B cell (primary cell): ENCODE measurements at regions of chr12 and their contacts with region 1.

Region 1: GRCh38 chr12:96035278-96036236 is at the start of gene LTA4H:
- DNase-seq: peak; percentile 100
- ATAC-seq: peak; percentile 90
- H3K4me3 ChIP-seq: peak within 1 kb of the TSS; percentile 62 to 99 (median 92)
- H3K4me3 Mint-ChIP-seq: no peak within 1 kb of the TSS
- H3K27ac ChIP-seq: peak within 1 kb of the TSS; percentile 64 to 69
- H3K27ac Mint-ChIP-seq: no peak within 1 kb of the TSS
- H3K4me1 ChIP-seq: peaks cover 40 to 44% of the 10 kb centered on the region in 2 donors
- H3K4me1 Mint-ChIP-seq: peaks cover 15% of the 10 kb centered on the region
- H3K27me3 ChIP-seq: no peaks in the 10 kb centered on the region
- H3K27me3 Mint-ChIP-seq: no peaks in the 10 kb centered on the region
- CTCF ChIP-seq: no peak
- total RNA-seq, gene LTA4H: 158 and 167 TPM in 2 replicates

Region 2: GRCh38 chr12:95574799-95575452 is 460.6 kb before region 1 on chr12:
- CTCF ChIA-PET with region 1: no interaction called
- POLR2A ChIA-PET with region 1: no interaction called
- intact Hi-C with region 1: loop called (anchors 10 kb)
- DNase-seq: peak; percentile 14
- ATAC-seq: no peak
- H3K4me3 ChIP-seq: peak overlapping the region in 1 of 5 experiments; percentile 43
- H3K4me3 Mint-ChIP-seq: peak overlapping the region; percentile 82
- H3K27ac ChIP-seq: peak overlapping the region; percentile 72 to 74
- H3K27ac Mint-ChIP-seq: peak overlapping the region; percentile 92
- H3K4me1 ChIP-seq: peaks cover 41 to 46% of the 10 kb centered on the region in 2 donors
- H3K4me1 Mint-ChIP-seq: peaks cover 43% of the 10 kb centered on the region
- H3K27me3 ChIP-seq: peaks cover 0 to 4% (median 0%) of the 10 kb centered on the region in 4 experiments
- H3K27me3 Mint-ChIP-seq: no peaks in the 10 kb centered on the region
- CTCF ChIP-seq: peak; percentile 27

Region 3: GRCh38 chr12:95858479-95859343 is 176.8 kb before region 1 on chr12 and contains the start of gene SNRPF:
- CTCF ChIA-PET with region 1: no interaction called
- POLR2A ChIA-PET with region 1: no interaction called
- intact Hi-C with region 1: loop called (anchors 1 kb)
- DNase-seq: peak; percentile 97
- ATAC-seq: peak; percentile 96
- H3K4me3 ChIP-seq: peak within 1 kb of the TSS; percentile 70 to 89 (median 76)
- H3K4me3 Mint-ChIP-seq: no peak within 1 kb of the TSS
- H3K27ac ChIP-seq: peak within 1 kb of the TSS; percentile 83 to 95
- H3K27ac Mint-ChIP-seq: peak within 1 kb of the TSS; percentile 37
- H3K4me1 ChIP-seq: peaks cover 24 to 28% of the 10 kb centered on the region in 2 donors
- H3K4me1 Mint-ChIP-seq: peaks cover 14% of the 10 kb centered on the region
- H3K27me3 ChIP-seq: peaks cover 0 to 11% (median 9%) of the 10 kb centered on the region in 4 experiments
- H3K27me3 Mint-ChIP-seq: peaks cover 9% of the 10 kb centered on the region
- CTCF ChIP-seq: peak; percentile 18
- total RNA-seq, gene SNRPF: 23.8 and 25.5 TPM in 2 replicates

Region 4: DNA sequence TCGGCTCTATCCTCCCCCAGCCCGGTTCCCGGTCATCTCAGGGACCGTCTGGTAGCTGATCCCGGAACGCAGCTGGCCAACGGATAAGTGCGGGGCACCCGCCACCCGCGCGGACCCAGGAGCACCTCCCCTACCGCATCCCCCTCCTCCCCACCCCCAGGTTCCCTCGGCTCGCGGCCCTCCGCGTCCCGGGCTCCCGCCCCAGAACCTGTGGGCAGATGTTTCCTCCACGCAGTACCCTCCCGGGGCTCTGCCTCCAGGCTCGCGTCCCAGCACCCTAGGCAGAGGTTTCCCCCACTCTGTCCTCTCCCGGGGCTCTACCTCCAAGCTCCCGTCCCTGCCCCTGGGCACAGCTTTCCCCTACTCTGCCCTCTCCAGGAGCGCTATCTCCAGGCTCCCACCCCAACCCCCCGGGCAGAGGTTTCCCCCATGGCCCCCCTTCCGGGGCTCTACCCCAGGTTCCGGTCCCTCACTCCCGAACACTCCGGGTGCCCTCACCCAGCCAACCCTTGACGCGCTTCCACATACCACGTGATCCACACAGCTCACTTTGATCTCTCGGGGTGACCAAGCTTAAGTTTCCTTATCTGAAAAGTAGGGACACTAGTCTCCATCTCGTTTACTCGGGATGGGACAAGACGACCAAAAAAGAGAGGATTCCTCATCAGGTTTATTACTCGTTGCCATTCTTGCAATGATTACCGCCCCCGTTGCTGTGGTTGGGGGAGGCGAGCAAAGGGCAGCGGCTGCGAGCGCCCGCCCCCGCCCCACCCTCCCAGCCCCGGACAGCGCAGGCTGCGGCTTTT is 92.8 kb before region 1 on chr12 and contains the start of gene CCDC38:
- CTCF ChIA-PET with region 1: interaction called, 4 read pairs
- POLR2A ChIA-PET with region 1: interaction called, 4 read pairs
- intact Hi-C with region 1: loop called (anchors 2 kb)
- DNase-seq: peak; percentile 85
- ATAC-seq: peak; percentile 88
- H3K4me3 ChIP-seq: peak within 1 kb of the TSS; percentile 68 to 94 (median 89)
- H3K4me3 Mint-ChIP-seq: peak within 1 kb of the TSS; percentile 98
- H3K27ac ChIP-seq: peak within 1 kb of the TSS; percentile 71 to 87
- H3K27ac Mint-ChIP-seq: peak within 1 kb of the TSS; percentile 92
- H3K4me1 ChIP-seq: peaks cover 9 to 11% of the 10 kb centered on the region in 2 donors
- H3K4me1 Mint-ChIP-seq: peaks cover 10% of the 10 kb centered on the region
- H3K27me3 ChIP-seq: no peaks in the 10 kb centered on the region
- H3K27me3 Mint-ChIP-seq: no peaks in the 10 kb centered on the region
- CTCF ChIP-seq: no peak
- total RNA-seq, gene CCDC38: 1.00 and 1.3 TPM in 2 replicates

Region 5: GRCh38 chr12:96020314-96021003 is 15.1 kb before region 1 on chr12:
- CTCF ChIA-PET with region 1: interaction called, 12 read pairs
- POLR2A ChIA-PET with region 1: interaction called, 14 read pairs
- intact Hi-C with region 1: loop called (anchors 1 kb)
- DNase-seq: peak; percentile 77
- ATAC-seq: peak; percentile 95
- H3K4me3 ChIP-seq: peak overlapping the region in 4 of 5 experiments; percentile 6 to 28 (median 20)
- H3K4me3 Mint-ChIP-seq: peak overlapping the region; percentile 62
- H3K27ac ChIP-seq: peak overlapping the region; percentile 62 to 79
- H3K27ac Mint-ChIP-seq: peak overlapping the region; percentile 89
- H3K4me1 ChIP-seq: peaks cover 28 to 34% of the 10 kb centered on the region in 2 donors
- H3K4me1 Mint-ChIP-seq: peaks cover 30% of the 10 kb centered on the region
- H3K27me3 ChIP-seq: no peaks in the 10 kb centered on the region
- H3K27me3 Mint-ChIP-seq: no peaks in the 10 kb centered on the region
- CTCF ChIP-seq: no peak

Region 6: DNA sequence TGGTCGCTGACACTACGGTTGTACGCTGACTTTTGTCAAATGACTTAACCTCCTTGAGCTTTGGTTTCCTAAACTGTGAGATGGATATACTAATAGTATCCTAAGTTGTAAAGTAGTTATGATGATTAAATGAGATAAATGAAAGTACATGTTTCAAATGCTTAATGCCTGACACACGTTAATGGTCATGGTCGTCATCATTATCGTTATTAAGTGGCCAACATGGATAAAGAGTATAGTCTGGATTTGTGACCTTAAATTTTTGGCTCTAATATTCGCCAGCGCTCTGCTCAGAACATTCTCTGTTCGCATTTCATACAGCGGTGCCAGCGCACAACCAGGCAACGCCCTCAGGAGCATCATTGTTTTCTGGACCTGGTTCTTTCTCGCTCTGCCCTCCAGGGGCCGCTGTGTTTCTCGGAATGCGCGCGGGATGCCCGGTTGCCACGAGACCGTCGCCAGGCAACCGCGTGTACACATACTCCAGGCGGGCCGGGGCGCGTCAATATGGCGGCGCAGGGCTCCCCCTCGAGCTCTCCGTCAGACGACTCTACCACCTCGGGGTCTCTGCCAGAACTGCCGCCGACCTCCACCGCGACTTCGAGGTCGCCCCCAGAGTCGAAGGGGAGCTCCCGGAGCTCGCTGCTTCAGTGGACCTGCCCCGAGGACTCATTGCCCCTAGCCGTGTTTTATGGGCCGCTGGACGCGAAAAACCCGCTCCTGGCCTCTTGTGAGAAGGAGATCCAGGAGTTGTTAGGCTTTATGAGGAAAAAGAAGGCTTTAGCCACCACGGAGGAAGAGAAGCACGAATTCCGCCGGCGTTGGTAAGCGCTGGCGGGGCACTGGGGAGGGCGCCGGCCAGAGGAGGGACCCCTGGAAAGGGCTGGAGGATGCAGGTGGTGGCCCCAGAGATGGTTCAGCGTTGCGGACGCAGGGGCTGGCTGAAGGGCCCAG is 453.8 kb after region 1 on chr12 and contains the start of gene CFAP54:
- CTCF ChIA-PET with region 1: no interaction called
- POLR2A ChIA-PET with region 1: no interaction called
- intact Hi-C with region 1: loop called (anchors 5 kb)
- DNase-seq: peak; percentile 96
- ATAC-seq: peak; percentile 91
- H3K4me3 ChIP-seq: peak within 1 kb of the TSS; percentile 35 to 75 (median 67)
- H3K4me3 Mint-ChIP-seq: peak within 1 kb of the TSS; percentile 90
- H3K27ac ChIP-seq: peak within 1 kb of the TSS in 1 of 2 donors; percentile 69
- H3K27ac Mint-ChIP-seq: peak within 1 kb of the TSS; percentile 86
- H3K4me1 ChIP-seq: peaks cover 8 to 10% of the 10 kb centered on the region in 2 donors
- H3K4me1 Mint-ChIP-seq: peaks cover 16% of the 10 kb centered on the region
- H3K27me3 ChIP-seq: peaks cover 0 to 6% (median 3%) of the 10 kb centered on the region in 4 experiments
- H3K27me3 Mint-ChIP-seq: no peaks in the 10 kb centered on the region
- CTCF ChIP-seq: peak; percentile 89
- total RNA-seq, gene CFAP54: 0.24 and 0.76 TPM in 2 replicates

Region 7: DNA sequence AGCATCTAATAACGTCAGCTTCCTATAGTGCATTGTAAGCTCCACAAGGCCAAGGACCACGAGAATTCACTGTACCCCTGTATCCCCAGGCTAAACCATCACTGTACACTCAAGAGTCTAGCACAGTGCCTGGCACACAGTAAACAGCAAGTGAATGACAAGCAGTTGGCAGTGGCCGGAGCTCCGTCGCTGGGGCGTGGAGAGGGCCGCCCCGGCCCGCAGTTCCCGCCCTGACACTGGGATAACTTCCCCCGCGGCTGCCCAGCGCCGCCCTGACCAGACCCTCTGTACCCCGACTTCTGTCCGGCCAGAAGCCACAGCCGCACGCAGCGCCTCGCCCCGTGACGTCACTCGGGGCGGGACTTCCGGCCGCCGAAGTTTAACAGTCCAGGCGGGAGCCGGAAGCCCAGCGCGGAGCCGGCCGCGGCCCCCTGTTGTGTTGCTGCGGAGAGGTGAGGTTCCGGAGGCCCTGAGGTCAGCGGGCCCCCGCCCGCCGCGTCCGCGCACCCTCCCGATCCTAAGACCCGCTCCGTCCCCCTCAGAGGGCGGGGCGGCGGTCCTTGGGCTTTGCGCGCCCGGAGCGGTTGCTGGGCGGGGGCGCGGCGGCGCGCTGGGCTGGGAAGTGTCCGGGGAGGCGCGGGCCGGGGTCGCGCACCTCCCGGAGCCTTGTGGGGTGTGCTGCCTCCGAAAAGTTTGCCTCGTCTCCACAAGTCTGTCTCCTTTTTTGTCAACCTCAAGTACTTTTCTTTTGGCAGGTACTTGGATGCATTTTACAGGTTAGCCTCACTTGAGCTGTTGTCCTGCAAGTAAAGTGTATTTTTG is 871.5 kb after region 1 on chr12 and contains the start of gene NEDD1:
- CTCF ChIA-PET with region 1: no interaction called
- POLR2A ChIA-PET with region 1: no interaction called
- intact Hi-C with region 1: loop called (anchors 1 kb)
- DNase-seq: peak; percentile 89
- ATAC-seq: peak; percentile 85
- H3K4me3 ChIP-seq: peak within 1 kb of the TSS; percentile 82 to 98 (median 94)
- H3K4me3 Mint-ChIP-seq: peak within 1 kb of the TSS; percentile 97
- H3K27ac ChIP-seq: peak within 1 kb of the TSS; percentile 91 to 96
- H3K27ac Mint-ChIP-seq: peak within 1 kb of the TSS; percentile 97
- H3K4me1 ChIP-seq: peaks cover 17 to 21% of the 10 kb centered on the region in 2 donors
- H3K4me1 Mint-ChIP-seq: peaks cover 42% of the 10 kb centered on the region
- H3K27me3 ChIP-seq: no peaks in the 10 kb centered on the region
- H3K27me3 Mint-ChIP-seq: no peaks in the 10 kb centered on the region
- CTCF ChIP-seq: no peak
- total RNA-seq, gene NEDD1: 16.8 and 20.3 TPM in 2 replicates